Naive thymus-derived CD4-positive, alpha-beta T cell (primary cell): ENCODE measurements at regions of chrX and their contacts with region 1.

Region 1: GRCh38 chrX:130165703-130166502 is at the start of gene AIFM1:
- DNase-seq: peak; percentile 68 to 90 (median 84)
- ATAC-seq: peak; percentile 94
- H3K4me3 ChIP-seq: peak within 1 kb of the TSS; percentile 87
- H3K4me3 Mint-ChIP-seq: peak within 1 kb of the TSS; percentile 84 to 98 (median 90)
- H3K27ac ChIP-seq: peak within 1 kb of the TSS; percentile 78
- H3K27ac Mint-ChIP-seq: peak within 1 kb of the TSS; percentile 85 to 96 (median 92)
- H3K4me1 ChIP-seq: peaks cover 8 to 10% of the 10 kb centered on the region in 2 donors
- H3K4me1 Mint-ChIP-seq: peaks cover 6 to 41% (median 32%) of the 10 kb centered on the region in 7 donors
- H3K27me3 ChIP-seq: no peaks in the 10 kb centered on the region
- H3K27me3 Mint-ChIP-seq: no peaks in the 10 kb centered on the region
- total RNA-seq, gene AIFM1: 11.6 to 35.8 (median 21.1) TPM

Region 2: DNA sequence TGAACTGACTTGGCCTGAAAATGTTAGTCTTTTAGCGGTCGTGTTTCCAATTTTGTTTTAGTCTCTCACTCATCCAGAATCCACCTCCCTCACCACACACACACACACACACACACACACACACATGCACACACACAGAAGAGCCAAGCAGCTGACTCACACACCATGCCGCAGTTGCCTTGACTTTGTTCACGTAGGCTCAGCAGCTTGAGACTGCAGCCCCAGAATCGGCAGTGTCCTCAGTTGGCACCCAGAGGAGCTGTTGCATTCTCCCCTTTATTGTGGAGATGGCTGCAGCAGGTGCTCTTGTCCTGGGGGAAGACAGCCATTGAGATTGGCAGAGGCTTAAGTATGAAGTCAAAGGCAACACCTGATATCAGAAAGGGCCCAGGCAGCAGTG is 448.0 kb before region 1 on chrX:
- CTCF ChIA-PET with region 1: no interaction called
- POLR2A ChIA-PET with region 1: no interaction called
- intact Hi-C with region 1: no loop called
- DNase-seq: no peak
- ATAC-seq: no peak
- H3K4me3 ChIP-seq: no peak overlapping the region
- H3K4me3 Mint-ChIP-seq: no peak overlapping the region
- H3K27ac ChIP-seq: no peak overlapping the region
- H3K27ac Mint-ChIP-seq: peak overlapping the region in 1 of 9 donors; percentile 4
- H3K4me1 ChIP-seq: peaks cover 5 to 9% of the 10 kb centered on the region in 2 donors
- H3K4me1 Mint-ChIP-seq: peaks cover 6 to 18% (median 14%) of the 10 kb centered on the region in 7 donors
- H3K27me3 ChIP-seq: no peaks in the 10 kb centered on the region
- H3K27me3 Mint-ChIP-seq: peaks cover 0 to 2% (median 0%) of the 10 kb centered on the region in 5 donors

Region 3: DNA sequence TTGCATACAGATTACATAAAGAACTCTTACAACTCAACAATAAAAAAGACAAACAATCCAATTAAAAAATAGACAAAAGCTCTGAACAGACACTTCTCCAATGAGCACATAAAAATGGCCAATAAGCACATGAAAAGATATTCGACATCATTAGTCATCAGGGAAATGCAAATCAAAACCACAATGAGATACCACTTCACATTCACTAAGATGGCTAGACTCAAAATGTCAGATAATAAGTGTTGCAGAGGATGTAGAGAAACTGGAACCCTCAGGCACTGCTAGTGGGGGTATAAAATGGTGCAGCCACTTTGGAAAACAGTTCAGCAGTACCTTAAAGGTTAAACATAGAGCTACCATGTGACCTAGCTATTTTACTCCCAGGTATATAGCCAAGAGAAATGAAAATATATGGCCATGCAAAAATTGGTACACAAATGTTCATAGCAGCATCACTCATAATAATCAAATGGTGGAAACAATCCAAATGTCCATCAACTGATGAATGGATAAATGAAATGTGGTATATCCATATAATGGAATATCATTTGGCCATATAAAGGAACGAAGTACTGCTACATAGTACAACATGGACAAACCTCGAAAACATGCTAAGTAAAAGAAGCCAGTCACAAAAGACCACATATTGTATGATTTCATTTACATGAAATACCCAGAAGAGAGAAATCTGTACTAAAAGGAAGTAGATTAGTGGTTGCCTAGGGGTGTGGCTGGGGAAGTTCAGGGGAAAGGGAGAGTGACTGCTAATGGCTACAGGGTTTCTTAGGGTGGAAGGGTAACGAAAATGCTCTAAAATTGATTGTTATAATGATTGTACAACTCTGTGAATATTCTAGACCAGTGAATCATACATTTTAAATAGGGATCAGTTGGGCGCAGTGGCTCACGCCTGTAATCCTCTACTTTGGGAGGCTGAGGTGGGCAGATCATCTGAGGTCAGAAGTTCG is 356.8 kb before region 1 on chrX:
- CTCF ChIA-PET with region 1: no interaction called
- POLR2A ChIA-PET with region 1: no interaction called
- intact Hi-C with region 1: no loop called
- DNase-seq: no peak
- ATAC-seq: peak; percentile 51
- H3K4me3 ChIP-seq: no peak overlapping the region
- H3K4me3 Mint-ChIP-seq: no peak overlapping the region
- H3K27ac ChIP-seq: no peak overlapping the region
- H3K27ac Mint-ChIP-seq: peak overlapping the region in 1 of 9 donors; percentile 60
- H3K4me1 ChIP-seq: no peaks in the 10 kb centered on the region
- H3K4me1 Mint-ChIP-seq: peaks cover 3 to 16% (median 7%) of the 10 kb centered on the region in 7 donors
- H3K27me3 ChIP-seq: no peaks in the 10 kb centered on the region
- H3K27me3 Mint-ChIP-seq: no peaks in the 10 kb centered on the region

Region 4: GRCh38 chrX:129931411-129932015 is 234.4 kb before region 1 on chrX:
- CTCF ChIA-PET with region 1: no interaction called
- POLR2A ChIA-PET with region 1: no interaction called
- intact Hi-C with region 1: loop called in 1 of 2 experiments (anchors 5 kb)
- DNase-seq: peak; percentile 18 to 58 (median 33)
- ATAC-seq: peak; percentile 75
- H3K4me3 ChIP-seq: peak overlapping the region; percentile 61
- H3K4me3 Mint-ChIP-seq: peak overlapping the region; percentile 66 to 89 (median 80)
- H3K27ac ChIP-seq: peak overlapping the region; percentile 59
- H3K27ac Mint-ChIP-seq: peak overlapping the region; percentile 70 to 92 (median 85)
- H3K4me1 ChIP-seq: no peaks in the 10 kb centered on the region
- H3K4me1 Mint-ChIP-seq: peaks cover 0 to 6% (median 5%) of the 10 kb centered on the region in 7 donors
- H3K27me3 ChIP-seq: no peaks in the 10 kb centered on the region
- H3K27me3 Mint-ChIP-seq: peaks cover 0 to 20% (median 0%) of the 10 kb centered on the region in 5 donors

Region 5: DNA sequence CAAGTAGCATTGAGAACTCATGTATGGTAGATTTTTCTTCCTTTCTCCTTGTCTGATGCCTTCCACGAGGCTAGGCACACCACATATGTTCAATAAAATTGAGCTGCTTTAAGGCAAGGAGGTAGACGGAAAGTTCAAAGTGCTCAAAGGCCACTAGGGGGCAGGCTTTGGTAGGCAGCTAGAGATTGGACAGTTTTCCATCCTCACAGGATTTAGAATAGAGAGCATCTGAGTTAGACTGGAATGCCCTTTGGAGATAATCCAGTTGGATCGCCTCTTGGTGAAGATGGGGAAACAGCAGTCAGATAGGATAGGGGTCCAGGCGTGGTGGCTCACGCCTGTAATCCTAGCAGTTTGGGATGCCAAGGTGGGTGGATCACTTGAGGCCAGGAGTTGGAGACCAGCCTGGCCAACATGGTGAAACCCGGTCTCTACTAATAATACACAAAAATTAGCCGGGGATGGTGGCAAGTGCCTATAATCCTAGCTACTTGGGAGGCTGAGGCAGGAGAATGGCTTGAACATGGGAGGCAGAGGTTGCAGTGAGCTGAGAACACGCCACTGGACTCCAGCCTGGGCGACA is 86.0 kb before region 1 on chrX:
- CTCF ChIA-PET with region 1: interaction called, 3 read pairs
- POLR2A ChIA-PET with region 1: interaction called, 3 read pairs
- intact Hi-C with region 1: loop called (anchors 1 kb)
- DNase-seq: peak in 8 of 9 donors; percentile 13 to 66 (median 52)
- ATAC-seq: no peak
- H3K4me3 ChIP-seq: no peak overlapping the region
- H3K4me3 Mint-ChIP-seq: peak overlapping the region in 7 of 10 donors; percentile 14 to 64 (median 47)
- H3K27ac ChIP-seq: peak overlapping the region; percentile 41
- H3K27ac Mint-ChIP-seq: peak overlapping the region; percentile 66 to 92 (median 85)
- H3K4me1 ChIP-seq: peaks cover 26 to 30% of the 10 kb centered on the region in 2 donors
- H3K4me1 Mint-ChIP-seq: peaks cover 19 to 46% (median 42%) of the 10 kb centered on the region in 7 donors
- H3K27me3 ChIP-seq: no peaks in the 10 kb centered on the region
- H3K27me3 Mint-ChIP-seq: no peaks in the 10 kb centered on the region

Region 6: DNA sequence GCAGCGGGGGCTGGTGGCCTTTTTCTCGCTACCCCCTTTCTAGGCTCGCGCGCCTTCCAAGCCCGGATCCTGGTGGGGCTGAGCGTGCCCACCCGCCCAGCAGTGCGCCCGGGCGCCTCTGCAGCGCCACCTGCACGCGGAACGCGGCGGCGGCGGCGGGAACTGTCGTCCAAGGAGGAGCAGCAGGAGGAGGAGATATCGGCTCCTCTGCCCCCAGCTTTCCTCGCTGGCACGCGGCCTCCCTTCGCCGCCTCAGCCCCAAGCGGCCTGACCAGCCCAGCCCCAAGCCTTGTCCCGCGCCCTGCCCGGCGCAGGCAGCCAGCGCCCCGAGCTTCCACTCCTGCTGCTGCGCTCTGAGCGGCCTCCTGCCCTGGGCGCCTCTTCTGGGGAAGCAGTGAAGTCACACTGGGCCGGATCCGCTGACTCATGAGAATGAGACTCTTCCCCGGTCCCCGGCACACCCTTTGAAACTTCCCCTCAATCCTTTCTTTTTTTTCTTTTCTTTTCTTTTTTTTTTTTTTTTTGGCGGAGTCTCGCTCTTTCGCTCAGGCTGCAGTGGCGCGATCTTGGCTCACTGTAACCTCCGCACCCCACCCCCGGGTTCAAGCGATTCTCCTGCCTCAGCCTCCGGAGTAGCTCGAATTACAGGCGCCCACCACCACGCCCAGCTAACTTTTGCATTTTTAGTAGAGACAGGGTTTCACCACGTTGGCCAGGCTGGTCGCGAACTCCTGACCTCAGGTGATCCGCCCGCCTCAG is 45.0 kb before region 1 on chrX:
- CTCF ChIA-PET with region 1: interaction called, 7 read pairs
- POLR2A ChIA-PET with region 1: no interaction called
- intact Hi-C with region 1: loop called (anchors 2 to 5 kb)
- DNase-seq: peak; percentile 50 to 75 (median 68)
- ATAC-seq: peak; percentile 91
- H3K4me3 ChIP-seq: peak overlapping the region; percentile 53
- H3K4me3 Mint-ChIP-seq: peak overlapping the region; percentile 29 to 74 (median 71)
- H3K27ac ChIP-seq: no peak overlapping the region
- H3K27ac Mint-ChIP-seq: peak overlapping the region in 1 of 9 donors; percentile 58
- H3K4me1 ChIP-seq: no peaks in the 10 kb centered on the region
- H3K4me1 Mint-ChIP-seq: peaks cover 0 to 19% (median 4%) of the 10 kb centered on the region in 7 donors
- H3K27me3 ChIP-seq: no peaks in the 10 kb centered on the region
- H3K27me3 Mint-ChIP-seq: no peaks in the 10 kb centered on the region

Region 7: DNA sequence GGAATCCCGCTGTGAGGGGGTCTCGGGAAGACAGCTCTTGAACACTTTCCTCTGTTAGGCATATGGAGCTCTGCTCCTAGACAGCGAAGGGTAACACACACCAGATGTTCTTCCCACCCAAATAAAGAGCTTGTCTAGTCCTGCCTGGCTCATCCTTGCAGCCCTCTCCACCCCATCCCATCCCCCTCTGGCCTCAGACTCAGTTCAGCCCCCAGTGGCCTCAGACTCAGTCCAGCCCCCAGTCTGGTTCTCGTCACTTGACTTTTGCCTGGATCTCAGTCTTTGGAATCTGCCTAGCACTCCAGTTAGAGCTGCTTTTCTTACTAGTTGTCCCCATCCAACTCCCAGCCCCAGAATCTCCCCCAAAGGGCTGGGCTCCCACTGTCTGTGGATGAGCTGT is 20.7 kb after region 1 on chrX:
- CTCF ChIA-PET with region 1: no interaction called
- POLR2A ChIA-PET with region 1: interaction called, 10 read pairs
- intact Hi-C with region 1: loop called in 1 of 2 experiments (anchors 2 kb)
- DNase-seq: no peak
- ATAC-seq: no peak
- H3K4me3 ChIP-seq: no peak overlapping the region
- H3K4me3 Mint-ChIP-seq: no peak overlapping the region
- H3K27ac ChIP-seq: no peak overlapping the region
- H3K27ac Mint-ChIP-seq: peak overlapping the region in 1 of 9 donors; percentile 43
- H3K4me1 ChIP-seq: peaks cover 6 to 13% of the 10 kb centered on the region in 2 donors
- H3K4me1 Mint-ChIP-seq: peaks cover 3 to 26% (median 13%) of the 10 kb centered on the region in 7 donors
- H3K27me3 ChIP-seq: no peaks in the 10 kb centered on the region
- H3K27me3 Mint-ChIP-seq: no peaks in the 10 kb centered on the region

Region 8: GRCh38 chrX:130902783-130903613 is 737.1 kb after region 1 on chrX and contains the start of gene ENOX2:
- CTCF ChIA-PET with region 1: no interaction called
- POLR2A ChIA-PET with region 1: no interaction called
- intact Hi-C with region 1: loop called in 1 of 2 experiments (anchors 5 kb)
- DNase-seq: peak; percentile 51 to 90 (median 83)
- ATAC-seq: peak; percentile 98
- H3K4me3 ChIP-seq: peak within 1 kb of the TSS; percentile 79
- H3K4me3 Mint-ChIP-seq: no peak within 1 kb of the TSS
- H3K27ac ChIP-seq: peak within 1 kb of the TSS; percentile 93
- H3K27ac Mint-ChIP-seq: peak within 1 kb of the TSS in 6 of 9 donors; percentile 51 to 91 (median 71)
- H3K4me1 ChIP-seq: peaks cover 0 to 5% of the 10 kb centered on the region in 2 donors
- H3K4me1 Mint-ChIP-seq: peaks cover 5 to 14% (median 12%) of the 10 kb centered on the region in 7 donors
- H3K27me3 ChIP-seq: no peaks in the 10 kb centered on the region
- H3K27me3 Mint-ChIP-seq: no peaks in the 10 kb centered on the region
- total RNA-seq, gene ENOX2: 10.3 to 15.3 (median 12.1) TPM

Region 9: DNA sequence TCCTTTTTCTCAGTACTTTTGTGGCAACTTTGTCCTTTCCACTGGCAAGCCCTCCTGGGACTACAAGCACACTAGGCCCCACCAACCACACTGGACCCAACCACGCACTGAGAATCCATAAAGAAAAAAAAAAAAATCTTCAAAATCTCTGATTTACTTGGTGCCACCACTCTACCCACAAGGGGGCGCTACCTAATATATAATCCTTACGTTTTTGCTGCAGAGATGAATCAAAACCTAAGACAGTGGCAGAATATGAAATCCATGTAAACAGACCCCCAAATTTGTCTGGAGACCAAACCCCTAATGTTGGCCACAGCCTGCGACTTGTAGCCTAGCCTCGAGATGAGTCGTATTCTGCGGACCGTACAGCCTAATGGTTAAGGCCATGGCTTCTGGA is 828.8 kb after region 1 on chrX:
- CTCF ChIA-PET with region 1: no interaction called
- POLR2A ChIA-PET with region 1: no interaction called
- intact Hi-C with region 1: no loop called
- DNase-seq: peak in 3 of 9 donors; percentile 1 to 11 (median 3)
- ATAC-seq: no peak
- H3K4me3 ChIP-seq: no peak overlapping the region
- H3K4me3 Mint-ChIP-seq: no peak overlapping the region
- H3K27ac ChIP-seq: no peak overlapping the region
- H3K27ac Mint-ChIP-seq: no peak overlapping the region
- H3K4me1 ChIP-seq: no peaks in the 10 kb centered on the region
- H3K4me1 Mint-ChIP-seq: no peaks in the 10 kb centered on the region
- H3K27me3 ChIP-seq: no peaks in the 10 kb centered on the region
- H3K27me3 Mint-ChIP-seq: peaks cover 0 to 6% (median 0%) of the 10 kb centered on the region in 5 donors

Region 10: GRCh38 chrX:131841496-131842410 is 1675.8 kb after region 1 on chrX:
- CTCF ChIA-PET with region 1: no interaction called
- POLR2A ChIA-PET with region 1: no interaction called
- intact Hi-C with region 1: no loop called
- DNase-seq: peak in 8 of 9 donors; percentile 5 to 67 (median 49)
- ATAC-seq: peak; percentile 81
- H3K4me3 ChIP-seq: no peak overlapping the region
- H3K4me3 Mint-ChIP-seq: peak overlapping the region in 1 of 10 donors; percentile 56
- H3K27ac ChIP-seq: no peak overlapping the region
- H3K27ac Mint-ChIP-seq: no peak overlapping the region
- H3K4me1 ChIP-seq: no peaks in the 10 kb centered on the region
- H3K4me1 Mint-ChIP-seq: peaks cover 0 to 9% (median 0%) of the 10 kb centered on the region in 7 donors
- H3K27me3 ChIP-seq: no peaks in the 10 kb centered on the region
- H3K27me3 Mint-ChIP-seq: peaks cover 0 to 2% (median 0%) of the 10 kb centered on the region in 5 donors